ENCODE measurements at regions of chr17 and their contacts with region 1.

Region 1: GRCh38 chr17:46212634-46213435 is 19.6 kb upstream of the KANSL1 start:
- DNase-seq: peak; percentile 40
- H3K4me3 Mint-ChIP-seq: no peak overlapping the region
- H3K27ac Mint-ChIP-seq: no peak overlapping the region
- H3K4me1 Mint-ChIP-seq: peaks cover 27% of the 10 kb centered on the region
- H3K27me3 Mint-ChIP-seq: no peaks in the 10 kb centered on the region

Region 2: DNA sequence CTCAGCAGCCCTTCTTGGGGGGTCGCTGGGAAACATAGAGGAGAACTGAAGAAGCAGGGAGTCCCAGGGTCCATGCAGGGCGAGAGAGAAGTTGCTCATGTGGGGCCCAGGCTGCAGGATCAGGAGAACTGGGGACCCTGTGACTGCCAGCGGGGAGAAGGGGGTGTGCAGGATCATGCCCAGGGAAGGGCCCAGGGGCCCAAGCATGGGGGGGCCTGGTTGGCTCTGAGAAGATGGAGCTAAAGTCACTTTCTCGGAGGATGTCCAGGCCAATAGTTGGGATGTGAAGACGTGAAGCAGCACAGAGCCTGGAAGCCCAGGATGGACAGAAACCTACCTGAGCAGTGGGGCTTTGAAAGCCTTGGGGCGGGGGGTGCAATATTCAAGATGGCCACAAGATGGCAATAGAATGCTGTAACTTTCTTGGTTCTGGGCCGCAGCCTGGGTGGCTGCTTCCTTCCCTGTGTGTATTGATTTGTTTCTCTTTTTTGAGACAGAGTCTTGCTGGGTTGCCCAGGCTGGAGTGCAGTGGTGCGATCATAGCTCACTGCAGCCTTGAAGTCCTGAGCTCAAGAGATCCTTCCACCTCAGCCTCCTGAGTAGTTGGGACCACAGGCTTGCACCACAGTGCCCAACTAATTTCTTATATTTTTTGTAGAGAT is 210.4 kb before region 1 on chr17:
- intact Hi-C with region 1: loop called (anchors 5 kb)
- DNase-seq: peak; percentile 55
- H3K4me3 Mint-ChIP-seq: no peak overlapping the region
- H3K27ac Mint-ChIP-seq: no peak overlapping the region
- H3K4me1 Mint-ChIP-seq: no peaks in the 10 kb centered on the region
- H3K27me3 Mint-ChIP-seq: peaks cover 2% of the 10 kb centered on the region

Region 3: DNA sequence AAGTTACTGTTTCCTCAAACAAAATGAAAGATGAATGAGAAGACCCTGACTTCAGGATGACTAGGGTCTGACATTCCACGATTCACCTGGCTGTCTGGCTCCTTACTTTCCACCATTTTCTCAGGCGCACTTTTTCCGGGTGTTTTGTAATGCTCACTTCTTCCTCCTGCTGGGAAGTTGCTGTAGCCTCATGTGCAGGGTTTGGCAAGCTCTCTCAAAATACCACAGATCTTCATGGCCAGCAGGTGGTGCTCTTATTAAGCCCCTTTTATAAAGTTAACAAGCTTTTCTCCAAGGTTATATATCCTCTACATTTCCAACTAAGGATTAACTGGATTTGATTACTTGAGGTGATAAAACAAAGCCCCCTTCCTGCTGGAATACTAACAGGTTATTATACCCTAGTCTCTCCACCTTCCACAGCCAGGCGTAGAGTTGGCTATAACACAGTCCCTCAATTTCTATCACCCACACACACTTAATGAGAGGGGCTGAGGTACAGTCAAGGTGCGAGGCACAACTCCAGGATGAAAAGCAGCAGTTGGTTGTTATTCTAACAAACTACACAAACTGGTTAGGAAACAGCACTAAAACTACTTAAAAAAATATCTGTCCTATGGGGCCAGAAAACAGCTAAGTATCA is 168.4 kb before region 1 on chr17:
- intact Hi-C with region 1: loop called (anchors 5 kb)
- DNase-seq: no peak
- H3K4me3 Mint-ChIP-seq: no peak overlapping the region
- H3K27ac Mint-ChIP-seq: no peak overlapping the region
- H3K4me1 Mint-ChIP-seq: peaks cover 19% of the 10 kb centered on the region
- H3K27me3 Mint-ChIP-seq: no peaks in the 10 kb centered on the region

Region 4: GRCh38 chr17:46154151-46154816 is 58.6 kb before region 1 on chr17:
- intact Hi-C with region 1: no loop called
- DNase-seq: no peak
- H3K4me3 Mint-ChIP-seq: peak overlapping the region; percentile 26
- H3K27ac Mint-ChIP-seq: peak overlapping the region; percentile 76
- H3K4me1 Mint-ChIP-seq: peaks cover 63% of the 10 kb centered on the region
- H3K27me3 Mint-ChIP-seq: no peaks in the 10 kb centered on the region

Measured in activated T-helper 2 cell treated with anti-CD3 and anti-CD28 coated beads, Interferon-gamma antibody, Interleukin-2, Interleukin-4, amounts not matched to agents 10 μg/mL and 5 μg/mL and 100 μg/mL, durations not matched to agents 14 hours and 24 hours and 36 hours (primary cell).